SK-N-SH (cell line): ENCODE measurements at regions of chr10 and their contacts with region 1.

Region 1: DNA sequence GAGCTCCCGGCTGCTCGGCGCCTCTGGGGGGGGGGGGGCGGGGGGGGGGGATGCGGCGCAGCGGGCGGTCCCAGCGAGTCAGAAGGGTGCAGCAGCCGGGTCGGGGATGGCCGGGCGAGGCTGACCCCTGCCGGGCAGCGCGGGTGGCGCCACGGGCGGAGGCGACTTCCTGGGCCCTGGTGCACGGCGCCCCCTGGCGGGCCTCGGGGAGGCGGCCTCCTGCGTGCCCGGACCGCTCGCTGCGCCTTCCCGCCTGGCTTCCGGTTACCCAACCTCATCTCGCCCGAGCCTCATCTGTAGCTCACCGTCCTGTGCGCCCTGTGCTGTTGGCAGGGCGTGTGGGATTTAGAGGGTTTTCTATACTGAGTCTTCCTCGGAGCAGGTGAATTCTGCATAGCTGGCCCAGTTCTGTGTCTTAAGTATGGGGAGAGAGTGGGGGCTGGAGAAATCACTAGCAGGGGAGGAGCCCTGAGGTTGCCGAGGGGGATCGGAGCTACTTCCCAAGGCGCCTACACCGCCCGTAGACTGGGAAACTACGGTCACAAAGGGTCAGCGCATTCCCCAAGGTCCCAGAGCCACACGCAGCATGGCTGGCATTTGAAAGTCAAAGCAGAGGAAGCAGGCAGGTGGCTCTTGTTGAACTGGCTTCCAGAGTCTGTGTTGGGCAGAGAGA is 28.3 kb upstream of the WDFY4 start:
- DNase-seq: peak; percentile 97
- H3K4me3 ChIP-seq: peak overlapping the region; percentile 69 to 71
- H3K27ac ChIP-seq: peak overlapping the region; percentile 69 to 74; a peak in 2 of 4 replicates
- H3K4me1 ChIP-seq: peaks cover 5 to 20% of the 10 kb centered on the region in 2 experiments; a peak in 2 of 4 replicates
- H3K27me3 ChIP-seq: no peaks in the 10 kb centered on the region
- CTCF ChIP-seq: peak; percentile 85
- EP300 ChIP-seq: peak in 1 of 2 experiments; percentile 26; a peak in 1 of 4 replicates
- RAD21 ChIP-seq: peak; percentile 93

Region 2: GRCh38 chr10:48363617-48364355 is 292.6 kb before region 1 on chr10:
- CTCF ChIA-PET with region 1: interaction called, 157 read pairs
- POLR2A ChIA-PET with region 1: interaction called, 3 read pairs
- DNase-seq: peak; percentile 30
- H3K4me3 ChIP-seq: no peak overlapping the region; a peak in 1 of 4 replicates
- H3K27ac ChIP-seq: peak overlapping the region; percentile 50 to 56; a peak in 3 of 4 replicates
- H3K4me1 ChIP-seq: peaks cover 15 to 26% of the 10 kb centered on the region in 2 experiments; a peak in 2 of 4 replicates
- H3K27me3 ChIP-seq: no peaks in the 10 kb centered on the region
- CTCF ChIP-seq: peak; percentile 82
- EP300 ChIP-seq: no peak
- RAD21 ChIP-seq: peak; percentile 96

Region 3: GRCh38 chr10:48463318-48464003 is 192.9 kb before region 1 on chr10:
- CTCF ChIA-PET with region 1: interaction called, 16 read pairs
- POLR2A ChIA-PET with region 1: no interaction called
- DNase-seq: peak; percentile 61
- H3K4me3 ChIP-seq: no peak overlapping the region
- H3K27ac ChIP-seq: peak overlapping the region in 1 of 2 experiments; percentile 14; a peak in 1 of 4 replicates
- H3K4me1 ChIP-seq: peaks cover 0 to 49% of the 10 kb centered on the region in 2 experiments; a peak in 1 of 4 replicates
- H3K27me3 ChIP-seq: no peaks in the 10 kb centered on the region
- CTCF ChIP-seq: no peak
- EP300 ChIP-seq: no peak
- RAD21 ChIP-seq: peak; percentile 38

Region 4: DNA sequence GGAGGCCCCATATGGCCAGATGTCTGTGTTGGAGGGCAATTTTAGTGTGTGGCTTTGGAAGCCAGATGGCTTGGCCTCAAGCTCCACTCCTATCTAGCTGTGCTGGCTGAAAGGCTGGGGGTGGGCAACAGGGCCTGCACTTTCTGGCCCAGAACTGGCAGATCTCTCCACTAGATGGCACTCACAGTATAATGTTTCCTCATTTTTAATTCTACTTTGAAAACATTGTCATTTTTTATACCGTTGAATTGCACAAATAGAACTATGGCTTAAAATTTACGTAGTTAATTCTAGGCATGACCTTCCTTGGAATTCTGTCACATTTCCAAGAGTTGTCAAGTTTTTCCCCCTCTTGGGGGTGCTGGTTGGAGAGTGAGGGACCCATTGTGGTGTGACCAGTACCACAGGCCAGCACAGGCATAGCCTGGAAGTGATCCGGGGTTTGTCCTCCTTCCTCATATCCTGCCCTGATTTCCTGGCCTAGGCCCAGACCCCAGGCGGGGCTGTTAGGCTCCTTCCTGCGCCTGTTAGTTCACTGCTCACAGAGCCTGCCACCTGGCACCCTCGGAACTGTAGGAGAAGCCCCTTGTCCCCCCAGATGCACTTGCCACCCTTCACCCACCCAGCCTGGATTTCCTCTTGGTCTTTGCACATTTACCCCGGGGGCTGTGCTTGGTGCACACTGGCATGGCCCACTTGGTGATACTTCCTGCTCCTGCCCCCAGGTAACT is 104.4 kb before region 1 on chr10:
- CTCF ChIA-PET with region 1: interaction called, 662 read pairs
- POLR2A ChIA-PET with region 1: interaction called, 25 read pairs
- DNase-seq: peak; percentile 87
- H3K4me3 ChIP-seq: no peak overlapping the region
- H3K27ac ChIP-seq: peak overlapping the region in 1 of 2 experiments; percentile 74; a peak in 2 of 4 replicates
- H3K4me1 ChIP-seq: peaks cover 0 to 27% of the 10 kb centered on the region in 2 experiments; a peak in 2 of 4 replicates
- H3K27me3 ChIP-seq: no peaks in the 10 kb centered on the region
- CTCF ChIP-seq: peak; percentile 85
- EP300 ChIP-seq: peak in 1 of 2 experiments; percentile 70; a peak in 2 of 4 replicates
- RAD21 ChIP-seq: peak; percentile 92

Region 5: GRCh38 chr10:48614481-48615390 is 41.6 kb before region 1 on chr10:
- CTCF ChIA-PET with region 1: interaction called, 148 read pairs
- POLR2A ChIA-PET with region 1: no interaction called
- DNase-seq: no peak
- H3K4me3 ChIP-seq: no peak overlapping the region
- H3K27ac ChIP-seq: no peak overlapping the region
- H3K4me1 ChIP-seq: peaks cover 0 to 26% of the 10 kb centered on the region in 2 experiments
- H3K27me3 ChIP-seq: no peaks in the 10 kb centered on the region
- CTCF ChIP-seq: peak; percentile 46
- EP300 ChIP-seq: no peak
- RAD21 ChIP-seq: no peak

Region 6: DNA sequence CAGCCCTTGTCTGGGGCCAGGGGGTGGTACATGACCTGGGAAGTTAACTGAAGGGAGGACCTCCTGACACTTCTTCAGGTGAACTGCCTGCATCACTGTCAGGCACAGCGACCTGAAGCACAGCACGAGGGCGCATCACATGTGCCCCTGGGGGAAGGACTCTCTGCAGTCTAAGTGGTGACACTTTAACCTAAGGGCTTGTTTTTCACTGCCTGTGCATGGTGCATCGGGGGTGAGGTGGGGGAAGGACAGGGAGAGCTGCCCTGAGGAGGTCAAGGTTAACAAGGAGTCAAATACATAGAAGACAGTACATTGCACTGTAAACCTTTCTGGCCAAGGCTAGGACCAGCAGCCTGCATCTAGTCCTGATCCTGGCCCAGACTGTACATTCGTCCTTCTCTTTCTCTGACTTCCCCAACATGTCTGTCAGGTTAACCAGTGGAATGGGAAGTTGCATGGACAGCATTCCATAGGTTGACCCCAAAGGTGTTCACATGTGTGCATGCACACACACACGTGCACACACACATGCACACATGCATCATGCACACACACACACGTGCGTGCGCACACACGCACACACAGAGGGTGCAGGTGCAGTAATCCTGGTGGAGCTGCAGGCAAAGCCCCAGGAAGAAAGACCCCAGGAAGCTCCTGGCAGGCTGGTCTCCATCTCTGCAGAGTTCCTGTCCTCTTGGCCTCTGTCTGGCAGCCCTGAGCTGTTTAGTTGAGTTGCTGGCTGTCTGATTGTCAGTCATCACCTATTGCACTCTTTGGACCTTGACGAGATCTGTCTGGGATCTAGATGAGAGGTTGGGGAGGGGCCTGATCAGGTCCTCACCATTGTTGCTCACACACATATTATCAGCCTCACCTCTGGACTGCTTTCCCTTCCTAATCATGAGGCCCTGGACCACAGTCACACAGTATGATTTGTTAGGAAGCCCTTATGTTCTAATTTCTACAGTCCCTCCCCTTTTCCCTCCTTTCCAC is 66.1 kb after region 1 on chr10:
- CTCF ChIA-PET with region 1: no interaction called
- POLR2A ChIA-PET with region 1: no interaction called
- DNase-seq: no peak
- H3K4me3 ChIP-seq: no peak overlapping the region
- H3K27ac ChIP-seq: no peak overlapping the region
- H3K4me1 ChIP-seq: peaks cover 0 to 10% of the 10 kb centered on the region in 2 experiments; a peak in 1 of 4 replicates
- H3K27me3 ChIP-seq: no peaks in the 10 kb centered on the region
- CTCF ChIP-seq: no peak
- EP300 ChIP-seq: no peak
- RAD21 ChIP-seq: no peak

Region 7: DNA sequence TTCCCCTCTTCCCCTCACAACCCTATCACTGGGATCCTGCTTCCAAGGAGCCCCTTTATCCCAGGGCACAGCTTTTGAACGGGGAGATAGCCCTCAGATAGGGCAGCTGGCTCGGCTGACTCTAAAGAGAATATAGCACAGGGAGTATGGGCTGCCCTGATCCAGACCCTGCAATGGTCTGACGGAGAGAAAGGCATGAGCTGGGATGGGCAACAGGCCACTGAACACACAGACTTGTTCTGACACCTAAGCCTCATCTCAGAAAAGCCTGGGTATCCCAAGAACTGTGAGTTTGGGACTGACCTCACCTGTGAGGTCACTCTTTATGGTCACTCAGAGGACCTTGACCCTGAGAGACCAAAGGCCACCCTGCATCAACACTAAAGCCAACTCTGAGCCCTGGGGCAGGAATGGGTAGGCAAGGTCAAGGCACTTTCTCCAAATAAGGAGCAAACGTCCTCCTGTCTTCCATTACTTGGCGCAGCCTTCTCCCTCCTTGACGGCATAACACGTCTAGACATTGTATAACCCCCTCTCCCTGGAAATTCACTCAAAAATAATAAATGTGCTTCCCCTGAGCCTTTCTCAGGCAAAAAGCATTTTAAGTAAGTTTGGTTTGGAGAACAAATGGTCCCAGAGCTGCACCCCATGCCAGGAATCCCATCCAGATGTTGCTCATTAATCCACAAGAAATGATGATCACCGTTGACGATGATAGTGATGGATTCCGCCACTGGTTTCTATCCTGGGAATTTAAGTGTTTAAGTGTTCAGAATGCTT is 291.5 kb after region 1 on chr10:
- CTCF ChIA-PET with region 1: interaction called, 41 read pairs
- POLR2A ChIA-PET with region 1: no interaction called
- DNase-seq: no peak
- H3K4me3 ChIP-seq: no peak overlapping the region
- H3K27ac ChIP-seq: no peak overlapping the region
- H3K4me1 ChIP-seq: peaks cover 0 to 27% of the 10 kb centered on the region in 2 experiments; a peak in 1 of 4 replicates
- H3K27me3 ChIP-seq: no peaks in the 10 kb centered on the region
- CTCF ChIP-seq: no peak
- EP300 ChIP-seq: no peak
- RAD21 ChIP-seq: no peak

Region 8: DNA sequence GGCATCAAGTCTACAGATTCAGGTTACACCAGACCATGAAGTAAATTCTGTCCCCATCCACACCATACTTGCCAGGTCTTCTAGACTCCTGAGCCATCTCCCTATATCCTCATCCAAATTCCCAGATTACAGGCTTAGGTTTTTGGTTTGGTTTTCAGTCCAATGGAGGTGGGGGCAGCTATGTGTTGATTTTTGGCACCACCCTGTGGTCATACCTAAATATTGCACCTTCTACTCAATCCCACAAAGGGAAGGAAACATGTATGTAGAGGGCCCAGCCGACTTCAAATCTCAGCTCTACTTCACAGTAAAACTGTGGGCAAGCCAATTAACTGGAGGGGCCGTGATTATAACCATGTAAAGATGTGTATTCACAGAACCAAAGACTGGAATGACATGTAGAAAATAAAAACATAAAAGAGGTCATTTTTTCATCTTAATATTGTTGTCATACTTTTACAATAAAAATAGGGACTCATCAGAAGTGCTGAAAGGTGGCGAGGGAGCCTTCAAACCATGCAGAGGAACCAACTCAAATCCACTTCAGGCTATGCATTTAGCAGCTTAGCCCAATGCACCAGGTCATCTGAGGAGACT is 862.7 kb after region 1 on chr10:
- CTCF ChIA-PET with region 1: interaction called, 137 read pairs
- POLR2A ChIA-PET with region 1: no interaction called
- DNase-seq: peak; percentile 67
- H3K4me3 ChIP-seq: no peak overlapping the region; a peak in 1 of 4 replicates
- H3K27ac ChIP-seq: no peak overlapping the region
- H3K4me1 ChIP-seq: no peaks in the 10 kb centered on the region; a peak in 1 of 4 replicates
- H3K27me3 ChIP-seq: no peaks in the 10 kb centered on the region
- CTCF ChIP-seq: peak; percentile 77
- EP300 ChIP-seq: no peak
- RAD21 ChIP-seq: peak; percentile 87